Activated B cell treated with CpG ODN at 0.5 μM for 24 hours (primary cell): ENCODE measurements at regions of chr17 and their contacts with region 1.

Region 1: GRCh38 chr17:27236717-27237315 is 57.1 kb upstream of the WSB1 start:
- DNase-seq: peak; percentile 48
- ATAC-seq: peak; percentile 59
- H3K4me3 Mint-ChIP-seq: no peak overlapping the region
- H3K27ac Mint-ChIP-seq: no peak overlapping the region
- H3K4me1 Mint-ChIP-seq: peaks cover 54% of the 10 kb centered on the region
- H3K27me3 Mint-ChIP-seq: no peaks in the 10 kb centered on the region
- CTCF ChIP-seq: peak; percentile 97

Region 2: DNA sequence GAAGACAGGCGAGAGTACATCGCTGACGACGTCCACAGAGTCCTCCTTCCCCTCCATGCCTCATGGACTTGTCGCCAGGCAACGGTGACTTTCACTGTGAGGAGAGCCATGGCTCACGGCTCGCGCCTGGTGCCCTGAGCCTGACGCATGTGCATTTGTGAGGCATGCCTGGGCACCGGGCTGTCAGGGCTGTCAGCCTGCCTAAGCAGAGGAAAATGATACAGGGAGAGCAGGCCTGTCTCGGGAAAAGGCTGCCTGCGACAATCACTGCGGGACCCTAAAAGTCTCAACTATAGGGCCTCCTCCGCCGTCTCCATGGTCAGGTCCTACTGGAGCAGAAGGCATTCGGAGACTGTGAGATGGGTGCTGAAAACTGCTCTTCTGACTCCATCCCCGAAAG is 78.4 kb before region 1 on chr17:
- CTCF ChIA-PET with region 1: no interaction called
- POLR2A ChIA-PET with region 1: no interaction called
- intact Hi-C with region 1: no loop called
- DNase-seq: no peak
- ATAC-seq: no peak
- H3K4me3 Mint-ChIP-seq: no peak overlapping the region
- H3K27ac Mint-ChIP-seq: no peak overlapping the region
- H3K4me1 Mint-ChIP-seq: no peaks in the 10 kb centered on the region
- H3K27me3 Mint-ChIP-seq: no peaks in the 10 kb centered on the region
- CTCF ChIP-seq: no peak

Region 3: GRCh38 chr17:27217631-27218030 is 19.2 kb before region 1 on chr17:
- CTCF ChIA-PET with region 1: interaction called, 26 read pairs
- POLR2A ChIA-PET with region 1: interaction called, 6 read pairs
- intact Hi-C with region 1: loop called (anchors 1 kb)
- DNase-seq: no peak
- ATAC-seq: peak; percentile 88
- H3K4me3 Mint-ChIP-seq: peak overlapping the region; percentile 74
- H3K27ac Mint-ChIP-seq: peak overlapping the region; percentile 99
- H3K4me1 Mint-ChIP-seq: peaks cover 48% of the 10 kb centered on the region
- H3K27me3 Mint-ChIP-seq: no peaks in the 10 kb centered on the region
- CTCF ChIP-seq: no peak

Region 4: DNA sequence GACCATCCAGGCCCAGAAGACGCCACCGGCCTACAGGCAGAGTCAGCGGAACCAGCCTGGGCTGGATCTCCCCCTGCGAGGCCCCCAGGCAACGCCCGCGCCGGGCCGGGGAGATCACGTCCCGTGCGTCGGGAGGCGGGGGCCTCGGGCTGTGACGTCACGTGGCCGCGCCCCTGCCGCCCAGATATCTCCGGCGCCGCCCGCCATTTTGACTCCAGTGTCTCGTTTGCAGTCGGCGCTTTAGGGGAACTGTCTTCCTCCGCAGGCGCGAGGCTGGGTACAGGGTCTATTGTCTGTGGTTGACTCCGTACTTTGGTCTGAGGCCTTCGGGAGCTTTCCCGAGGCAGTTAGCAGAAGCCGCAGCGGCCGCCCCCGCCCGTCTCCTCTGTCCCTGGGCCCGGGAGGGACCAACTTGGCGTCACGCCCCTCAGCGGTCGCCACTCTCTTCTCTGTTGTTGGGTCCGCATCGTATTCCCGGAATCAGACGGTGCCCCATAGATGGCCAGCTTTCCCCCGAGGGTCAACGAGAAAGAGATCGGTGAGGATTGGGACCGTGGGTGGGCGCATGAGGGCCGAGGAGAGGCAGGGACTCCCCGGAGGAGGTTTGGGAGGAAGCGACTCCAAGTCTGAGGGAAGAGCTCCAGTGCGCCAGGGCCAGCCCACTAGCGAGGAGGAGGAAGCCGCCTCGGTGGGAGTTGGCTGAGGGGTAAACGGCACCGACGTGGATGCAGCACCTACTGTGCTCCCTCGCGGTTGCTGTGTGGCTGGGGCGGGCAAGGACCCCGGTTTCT is 57.3 kb after region 1 on chr17 and contains the start of gene WSB1:
- CTCF ChIA-PET with region 1: interaction called, 26 read pairs
- POLR2A ChIA-PET with region 1: interaction called, 96 read pairs
- intact Hi-C with region 1: loop called (anchors 1 kb)
- DNase-seq: peak; percentile 94
- ATAC-seq: peak; percentile 83
- H3K4me3 Mint-ChIP-seq: peak within 1 kb of the TSS; percentile 100
- H3K27ac Mint-ChIP-seq: peak within 1 kb of the TSS; percentile 99
- H3K4me1 Mint-ChIP-seq: peaks cover 45% of the 10 kb centered on the region
- H3K27me3 Mint-ChIP-seq: no peaks in the 10 kb centered on the region
- CTCF ChIP-seq: no peak
- total RNA-seq, gene WSB1: 115 and 125 TPM in 2 replicates

Region 5: GRCh38 chr17:27381007-27381501 is 144.2 kb after region 1 on chr17:
- CTCF ChIA-PET with region 1: interaction called, 10 read pairs
- POLR2A ChIA-PET with region 1: no interaction called
- intact Hi-C with region 1: loop called (anchors 1 kb)
- DNase-seq: peak; percentile 70
- ATAC-seq: peak; percentile 94
- H3K4me3 Mint-ChIP-seq: no peak overlapping the region
- H3K27ac Mint-ChIP-seq: no peak overlapping the region
- H3K4me1 Mint-ChIP-seq: peaks cover 6% of the 10 kb centered on the region
- H3K27me3 Mint-ChIP-seq: peaks cover 18% of the 10 kb centered on the region
- CTCF ChIP-seq: peak; percentile 35

Region 6: GRCh38 chr17:27601069-27601975 is 364.5 kb after region 1 on chr17:
- CTCF ChIA-PET with region 1: interaction called, 131 read pairs
- POLR2A ChIA-PET with region 1: interaction called, 3 read pairs
- intact Hi-C with region 1: loop called (anchors 1 kb)
- DNase-seq: peak; percentile 71
- ATAC-seq: peak; percentile 64
- H3K4me3 Mint-ChIP-seq: no peak overlapping the region
- H3K27ac Mint-ChIP-seq: no peak overlapping the region
- H3K4me1 Mint-ChIP-seq: peaks cover 2% of the 10 kb centered on the region
- H3K27me3 Mint-ChIP-seq: no peaks in the 10 kb centered on the region
- CTCF ChIP-seq: no peak